PC-9 (cell line): ENCODE measurements at regions of chr5 and their contacts with region 1.

Region 1: DNA sequence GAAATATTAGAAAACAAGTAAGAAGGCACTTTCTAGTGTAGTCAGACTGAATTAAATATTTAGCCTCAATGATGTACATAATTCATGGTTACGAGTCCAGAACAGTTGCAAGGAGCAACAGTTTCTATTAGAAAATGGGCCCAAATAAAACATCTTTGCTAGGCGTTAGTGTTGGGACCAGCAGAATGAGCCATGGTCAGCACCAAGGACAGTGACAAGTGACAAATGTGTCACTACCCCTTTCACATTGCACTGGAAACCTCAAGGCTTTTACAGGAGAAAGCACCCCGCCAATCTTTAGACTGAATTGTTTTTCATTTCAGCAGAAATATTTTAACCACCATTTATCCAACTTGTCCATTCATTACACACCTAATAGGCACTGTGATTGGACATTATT is 301.3 kb upstream of the ADCY2 start:
- DNase-seq: peak in 1 of 2 experiments; percentile 10
- H3K4me3 ChIP-seq: no peak overlapping the region
- H3K27ac ChIP-seq: no peak overlapping the region
- H3K4me1 ChIP-seq: no peaks in the 10 kb centered on the region
- H3K27me3 ChIP-seq: no peaks in the 10 kb centered on the region
- CTCF ChIP-seq: no peak

Region 2: DNA sequence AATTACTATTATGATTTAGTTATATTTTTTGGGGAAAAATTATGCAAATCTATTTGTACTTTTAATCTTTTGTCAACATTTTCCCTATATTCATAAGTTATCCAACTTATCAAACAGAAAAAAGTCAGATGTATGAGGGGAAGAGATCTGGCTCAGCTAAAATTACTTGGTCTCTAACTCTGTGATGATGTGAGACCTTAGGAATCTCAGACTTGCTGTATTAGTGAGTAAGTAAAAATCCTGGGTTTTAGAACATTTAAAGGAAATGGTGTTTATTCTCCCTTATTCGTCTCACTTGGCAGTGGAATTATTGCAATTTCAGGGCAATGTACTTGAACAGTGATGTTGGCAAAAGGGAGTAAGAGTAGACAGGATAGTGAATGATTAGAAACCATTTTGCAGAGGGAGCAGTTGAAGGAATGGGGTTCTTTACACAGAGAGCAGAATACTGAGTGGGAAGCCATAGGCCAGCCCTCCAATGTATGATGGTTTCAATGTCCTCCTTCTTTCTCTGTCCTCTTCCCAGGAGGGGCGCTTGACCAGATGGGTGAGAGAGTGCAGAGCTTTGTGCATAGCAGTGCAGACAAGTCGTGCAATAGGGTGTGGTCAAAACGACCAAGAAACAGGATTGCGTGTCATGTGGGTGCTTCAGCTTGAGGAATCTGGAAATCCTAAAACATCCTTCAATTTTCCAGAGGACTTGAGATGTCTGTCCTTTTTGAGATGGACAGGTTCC is 289.7 kb before region 1 on chr5:
- CTCF ChIA-PET with region 1: no interaction called
- POLR2A ChIA-PET with region 1: no interaction called
- intact Hi-C with region 1: no loop called
- DNase-seq: no peak
- H3K4me3 ChIP-seq: no peak overlapping the region
- H3K27ac ChIP-seq: no peak overlapping the region
- H3K4me1 ChIP-seq: no peaks in the 10 kb centered on the region
- H3K27me3 ChIP-seq: no peaks in the 10 kb centered on the region
- CTCF ChIP-seq: no peak

Region 3: DNA sequence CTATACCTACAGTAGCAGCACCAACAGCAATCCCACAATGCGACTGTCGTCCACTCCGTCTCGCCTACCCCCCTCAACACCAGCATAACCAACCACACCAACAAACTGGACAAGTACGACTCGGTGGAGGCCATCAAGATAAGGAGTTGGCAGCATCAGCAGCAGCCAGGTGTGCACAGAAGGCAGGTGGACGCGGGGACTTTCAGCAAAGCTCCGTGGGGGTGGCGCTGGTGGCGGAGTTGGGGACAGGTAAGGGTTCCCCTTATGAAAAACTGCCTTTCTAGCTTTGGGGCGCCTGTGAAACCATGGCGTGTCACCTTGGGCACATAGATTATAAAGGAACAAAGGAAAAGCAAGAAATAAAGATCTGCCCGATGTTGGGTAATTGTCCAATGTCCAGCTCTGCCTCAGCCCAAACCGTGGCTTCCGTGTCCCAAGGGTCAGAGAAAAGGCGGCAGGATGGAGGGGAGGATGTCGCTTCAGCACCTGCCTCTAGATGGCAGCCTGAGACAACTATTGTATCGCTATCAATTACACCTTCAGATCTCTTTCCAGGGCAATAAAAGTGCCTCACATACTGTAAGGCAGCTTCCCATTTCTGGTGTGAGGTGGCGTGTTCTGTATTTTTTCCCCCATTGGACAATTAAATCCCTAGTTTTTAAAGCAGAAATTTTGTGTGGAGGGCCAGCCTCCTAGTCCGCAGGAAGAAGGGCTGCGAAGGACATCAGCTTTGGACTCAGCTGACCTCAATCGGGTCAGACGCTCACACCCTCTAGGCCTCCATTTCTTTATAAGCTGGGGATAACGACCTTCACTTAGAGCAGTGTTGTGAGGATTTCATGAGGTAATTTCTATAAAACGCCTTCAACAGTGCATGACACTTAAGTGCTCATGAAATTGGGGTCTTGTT is 833.1 kb after region 1 on chr5:
- CTCF ChIA-PET with region 1: no interaction called
- POLR2A ChIA-PET with region 1: no interaction called
- intact Hi-C with region 1: no loop called
- DNase-seq: peak; percentile 47 to 65
- H3K4me3 ChIP-seq: no peak overlapping the region
- H3K27ac ChIP-seq: no peak overlapping the region
- H3K4me1 ChIP-seq: no peaks in the 10 kb centered on the region
- H3K27me3 ChIP-seq: peaks cover 83% of the 10 kb centered on the region
- CTCF ChIP-seq: peak; percentile 91

Region 4: GRCh38 chr5:8366266-8366665 is 1271.6 kb after region 1 on chr5:
- CTCF ChIA-PET with region 1: interaction called, 10 read pairs
- POLR2A ChIA-PET with region 1: no interaction called
- intact Hi-C with region 1: no loop called
- DNase-seq: peak in 1 of 2 experiments; percentile 10
- H3K4me3 ChIP-seq: no peak overlapping the region
- H3K27ac ChIP-seq: no peak overlapping the region
- H3K4me1 ChIP-seq: no peaks in the 10 kb centered on the region
- H3K27me3 ChIP-seq: peaks cover 24% of the 10 kb centered on the region
- CTCF ChIP-seq: no peak